ENCODE measurements at regions of chr2 and their contacts with region 1.

Region 1: GRCh38 chr2:19989681-19990415 is at the start of gene WDR35:
- H3K4me3 Mint-ChIP-seq: peak within 1 kb of the TSS; percentile 90
- H3K27ac Mint-ChIP-seq: peak within 1 kb of the TSS; percentile 78
- H3K4me1 Mint-ChIP-seq: peaks cover 17% of the 10 kb centered on the region
- H3K27me3 Mint-ChIP-seq: peaks cover 24% of the 10 kb centered on the region

Region 2: GRCh38 chr2:19860022-19860421 is 129.8 kb before region 1 on chr2:
- intact Hi-C with region 1: no loop called
- H3K4me3 Mint-ChIP-seq: no peak overlapping the region
- H3K27ac Mint-ChIP-seq: no peak overlapping the region
- H3K4me1 Mint-ChIP-seq: peaks cover 7% of the 10 kb centered on the region
- H3K27me3 Mint-ChIP-seq: peaks cover 18% of the 10 kb centered on the region

Region 3: GRCh38 chr2:20051532-20052228 is 61.8 kb after region 1 on chr2 and contains the start of gene LAPTM4A:
- intact Hi-C with region 1: loop called (anchors 2 kb)
- H3K4me3 Mint-ChIP-seq: no peak within 1 kb of the TSS
- H3K27ac Mint-ChIP-seq: no peak within 1 kb of the TSS
- H3K4me1 Mint-ChIP-seq: peaks cover 26% of the 10 kb centered on the region
- H3K27me3 Mint-ChIP-seq: peaks cover 19% of the 10 kb centered on the region

Measured in dendritic cell treated with granulocyte-macrophage colony-stimulating factor and Interleukin-4, amounts not matched to agents 40 ng/mL and 50 ng/mL, for 4 days (primary cell).